ENCODE measurements at regions of chr12 and their contacts with region 1.

Region 1: DNA sequence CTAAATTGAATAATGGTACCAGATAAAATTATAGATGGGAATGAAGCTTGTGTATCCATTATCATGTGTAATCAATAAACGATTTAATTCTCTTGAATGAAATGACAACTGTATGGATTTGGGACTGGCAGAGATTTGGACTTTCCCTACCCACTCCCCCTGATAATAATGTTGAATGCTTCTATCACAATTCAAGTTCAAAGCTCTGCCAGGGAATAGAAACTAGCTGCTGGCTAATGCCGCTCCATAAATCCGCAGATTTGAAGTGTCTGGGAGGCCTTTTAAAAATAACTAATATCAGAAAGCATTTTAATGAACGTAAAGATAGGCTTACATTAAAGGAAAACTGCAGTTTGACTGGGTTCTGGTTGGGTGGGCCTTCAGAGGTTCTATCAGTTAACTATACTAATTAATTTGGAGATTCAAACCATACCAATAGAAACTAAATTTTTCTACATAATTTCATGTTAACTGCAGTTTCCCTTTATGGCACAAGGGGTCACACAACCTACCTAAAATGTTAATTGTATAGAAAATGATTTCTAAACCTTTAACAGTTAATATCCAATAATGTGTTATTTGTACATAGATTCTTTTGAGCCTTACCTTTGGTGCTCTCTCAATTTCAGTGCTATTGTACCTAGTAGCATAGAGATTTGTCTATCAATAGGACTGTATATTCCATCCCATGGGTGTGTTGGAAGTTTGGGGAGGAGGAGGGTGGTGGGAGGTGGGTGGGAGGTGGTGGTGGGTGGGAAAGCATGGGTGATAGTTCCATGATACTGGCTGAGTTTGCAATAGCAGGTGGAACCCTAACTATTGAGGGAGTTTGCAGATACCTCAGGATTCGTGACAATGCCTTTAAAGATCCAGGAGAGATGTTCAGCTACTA is 4.9 kb downstream of the HNRNPA1 start:
- DNase-seq: no peak
- H3K4me3 ChIP-seq: no peak overlapping the region
- H3K27ac ChIP-seq: no peak overlapping the region
- H3K4me1 ChIP-seq: peaks cover 0 to 49% (median 35%) of the 10 kb centered on the region in 4 donors
- H3K27me3 ChIP-seq: no peaks in the 10 kb centered on the region
- CTCF ChIP-seq: peak in 1 of 2 experiments; percentile 11

Region 2: DNA sequence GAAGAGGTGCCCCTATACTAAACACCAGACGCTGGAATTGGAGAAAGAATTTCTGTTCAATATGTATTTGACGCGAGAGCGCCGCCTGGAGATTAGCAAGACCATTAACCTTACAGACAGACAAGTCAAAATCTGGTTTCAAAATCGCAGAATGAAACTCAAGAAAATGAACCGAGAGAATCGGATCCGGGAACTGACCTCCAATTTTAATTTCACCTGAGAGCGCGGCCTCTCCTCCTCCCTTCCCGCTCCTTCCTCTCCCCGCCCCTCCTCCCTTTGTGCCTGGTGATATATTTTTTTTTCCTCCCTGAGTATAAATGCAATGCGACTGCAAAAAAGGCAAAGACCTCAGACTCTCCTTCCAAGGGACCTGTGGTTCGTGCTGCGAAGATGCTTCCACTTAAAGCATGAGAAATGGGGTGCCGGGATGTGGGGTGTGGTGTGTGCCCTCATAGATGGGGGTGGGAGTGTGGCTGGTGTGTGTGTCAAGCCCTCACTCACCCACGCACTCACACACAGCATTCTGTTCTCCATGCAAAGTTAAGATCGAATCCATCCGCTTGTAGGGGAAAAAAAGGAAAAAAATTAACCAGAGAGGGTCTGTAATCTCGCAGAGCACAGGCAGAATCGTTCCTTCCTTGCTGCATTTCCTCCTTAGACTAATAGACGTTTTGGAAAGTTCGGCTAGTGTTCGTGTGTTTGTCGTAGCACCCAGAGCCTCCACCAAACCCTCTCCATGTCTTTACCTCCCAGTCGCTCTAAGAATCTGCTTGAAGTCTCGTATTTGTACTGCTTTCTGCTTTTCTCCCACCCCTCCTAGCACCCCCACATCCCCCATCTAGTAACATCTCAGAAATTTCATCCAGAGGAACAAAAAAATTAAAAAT is 295.9 kb before region 1 on chr12:
- intact Hi-C with region 1: no loop called
- DNase-seq: no peak
- H3K4me3 ChIP-seq: peak overlapping the region; percentile 64 to 84
- H3K27ac ChIP-seq: peak overlapping the region; percentile 93 to 98
- H3K4me1 ChIP-seq: peaks cover 5 to 71% (median 60%) of the 10 kb centered on the region in 4 donors
- H3K27me3 ChIP-seq: no peaks in the 10 kb centered on the region
- CTCF ChIP-seq: peak; percentile 28 to 30

Region 3: DNA sequence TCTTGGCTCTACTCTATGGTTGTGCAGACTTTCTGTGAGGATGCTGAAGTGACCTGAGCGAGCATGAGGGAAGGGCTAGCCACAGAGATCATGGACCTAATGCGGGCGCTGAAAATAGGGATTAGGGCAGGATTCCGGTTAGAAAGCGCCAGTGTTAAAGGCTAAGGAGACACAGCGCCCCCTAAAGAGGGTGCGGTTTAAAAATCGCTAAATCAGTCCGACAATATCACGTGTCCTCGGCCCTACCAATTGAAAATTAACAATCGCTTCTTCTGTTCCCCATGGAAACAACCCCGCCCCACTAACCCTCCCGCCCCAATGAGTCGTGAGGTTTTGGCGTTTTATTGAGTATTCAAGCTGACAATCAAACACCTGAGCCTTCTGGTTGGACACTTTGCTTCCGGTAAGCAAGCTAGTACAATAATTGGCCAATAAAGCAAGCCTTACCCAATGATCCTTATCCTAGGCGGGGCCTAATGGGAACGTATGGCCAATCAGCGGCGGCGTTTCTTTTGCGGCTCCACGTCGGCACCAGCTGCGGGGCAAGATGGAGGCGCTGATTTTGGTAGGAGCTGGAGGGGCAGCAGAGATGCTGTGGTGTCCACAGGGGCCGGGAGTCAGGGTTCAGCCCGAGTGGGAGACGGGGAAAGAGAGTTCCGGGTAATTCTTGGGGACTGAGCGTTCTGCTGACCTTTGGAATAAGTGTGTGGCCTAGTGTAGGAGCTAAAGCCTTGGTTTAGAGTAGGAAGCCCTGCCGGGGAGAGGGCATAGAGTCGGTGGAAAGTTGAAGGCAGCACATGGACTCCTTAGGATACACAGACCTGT is 39.4 kb after region 1 on chr12 and contains the start of gene COPZ1:
- intact Hi-C with region 1: loop called (anchors 5 kb)
- DNase-seq: peak; percentile 97 to 98
- H3K4me3 ChIP-seq: peak within 1 kb of the TSS; percentile 77 to 86
- H3K27ac ChIP-seq: peak within 1 kb of the TSS; percentile 82 to 90
- H3K4me1 ChIP-seq: peaks cover 0 to 42% (median 22%) of the 10 kb centered on the region in 4 donors
- H3K27me3 ChIP-seq: no peaks in the 10 kb centered on the region
- CTCF ChIP-seq: peak; percentile 54 to 59

Region 4: GRCh38 chr12:54853995-54854566 is 568.7 kb after region 1 on chr12 and contains the start of gene MUCL1:
- intact Hi-C with region 1: no loop called
- DNase-seq: peak in 1 of 2 donors; percentile 29
- H3K4me3 ChIP-seq: no peak within 1 kb of the TSS
- H3K27ac ChIP-seq: no peak within 1 kb of the TSS
- H3K4me1 ChIP-seq: no peaks in the 10 kb centered on the region
- H3K27me3 ChIP-seq: no peaks in the 10 kb centered on the region
- CTCF ChIP-seq: peak; percentile 33 to 45